Activated CD4-positive, alpha-beta T cell treated with anti-CD3 and anti-CD28 coated beads for 36 hours (primary cell): ENCODE measurements at regions of chr16 and their contacts with region 1.

Region 1: DNA sequence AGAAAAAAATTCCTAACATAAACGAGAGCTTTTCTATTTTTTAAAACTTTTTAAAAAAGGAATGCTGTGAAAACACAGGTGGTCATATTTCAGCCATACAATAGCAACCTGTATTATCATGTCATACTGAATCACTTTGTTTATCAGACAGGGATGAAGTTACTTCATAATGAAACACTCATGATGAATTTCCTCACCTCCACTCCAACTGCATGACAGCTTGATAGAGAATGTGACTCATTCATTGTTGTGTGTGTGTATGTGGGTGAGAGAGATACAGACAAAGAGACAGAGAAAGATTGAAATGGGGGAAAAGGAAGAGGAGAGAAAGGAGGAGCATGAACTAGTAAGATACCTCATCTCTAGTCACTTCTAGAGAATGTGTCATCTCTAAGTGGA is 109.0 kb downstream of the SYCE1L start:
- DNase-seq: no peak
- ATAC-seq: peak; percentile 95
- H3K4me3 Mint-ChIP-seq: no peak overlapping the region
- H3K27ac Mint-ChIP-seq: peak overlapping the region; percentile 73
- H3K4me1 Mint-ChIP-seq: peaks cover 28% of the 10 kb centered on the region
- H3K27me3 Mint-ChIP-seq: peaks cover 14% of the 10 kb centered on the region

Region 2: GRCh38 chr16:76932541-76933211 is 375.5 kb before region 1 on chr16:
- CTCF ChIA-PET with region 1: no interaction called
- POLR2A ChIA-PET with region 1: no interaction called
- intact Hi-C with region 1: loop called in 1 of 2 experiments (anchors 5 kb)
- DNase-seq: no peak
- ATAC-seq: peak; percentile 85
- H3K4me3 Mint-ChIP-seq: no peak overlapping the region
- H3K27ac Mint-ChIP-seq: no peak overlapping the region
- H3K4me1 Mint-ChIP-seq: peaks cover 4% of the 10 kb centered on the region
- H3K27me3 Mint-ChIP-seq: peaks cover 10% of the 10 kb centered on the region

Region 3: GRCh38 chr16:77090062-77090461 is 218.1 kb before region 1 on chr16:
- CTCF ChIA-PET with region 1: no interaction called
- POLR2A ChIA-PET with region 1: no interaction called
- intact Hi-C with region 1: no loop called
- DNase-seq: no peak
- ATAC-seq: no peak
- H3K4me3 Mint-ChIP-seq: no peak overlapping the region
- H3K27ac Mint-ChIP-seq: no peak overlapping the region
- H3K4me1 Mint-ChIP-seq: no peaks in the 10 kb centered on the region
- H3K27me3 Mint-ChIP-seq: peaks cover 6% of the 10 kb centered on the region

Region 4: DNA sequence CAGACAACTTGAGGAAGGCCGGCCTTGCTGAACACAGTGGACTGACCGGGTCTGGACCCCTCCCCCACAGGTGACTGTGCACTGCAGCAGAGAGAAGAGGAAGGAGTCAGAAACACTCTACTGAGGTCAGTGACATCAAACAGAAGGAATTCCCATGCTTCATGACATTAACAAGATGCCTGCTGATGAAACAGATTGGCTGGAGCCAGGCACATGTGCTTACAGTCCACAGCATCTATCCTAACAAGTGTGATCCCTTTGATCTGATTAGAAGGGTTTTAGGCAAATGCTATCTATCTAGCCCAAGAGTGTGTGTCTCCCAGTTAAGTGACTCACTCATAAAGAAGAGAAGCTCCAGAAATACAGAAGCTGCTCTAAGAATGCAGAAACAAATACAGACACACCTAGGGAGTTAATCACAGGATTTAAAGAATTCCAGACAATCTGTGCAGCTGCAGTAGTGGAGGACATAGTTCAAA is 18.8 kb before region 1 on chr16:
- CTCF ChIA-PET with region 1: no interaction called
- POLR2A ChIA-PET with region 1: no interaction called
- intact Hi-C with region 1: loop called in 1 of 2 experiments (anchors 2 kb)
- DNase-seq: no peak
- ATAC-seq: no peak
- H3K4me3 Mint-ChIP-seq: no peak overlapping the region
- H3K27ac Mint-ChIP-seq: no peak overlapping the region
- H3K4me1 Mint-ChIP-seq: peaks cover 10% of the 10 kb centered on the region
- H3K27me3 Mint-ChIP-seq: peaks cover 1% of the 10 kb centered on the region

Region 5: DNA sequence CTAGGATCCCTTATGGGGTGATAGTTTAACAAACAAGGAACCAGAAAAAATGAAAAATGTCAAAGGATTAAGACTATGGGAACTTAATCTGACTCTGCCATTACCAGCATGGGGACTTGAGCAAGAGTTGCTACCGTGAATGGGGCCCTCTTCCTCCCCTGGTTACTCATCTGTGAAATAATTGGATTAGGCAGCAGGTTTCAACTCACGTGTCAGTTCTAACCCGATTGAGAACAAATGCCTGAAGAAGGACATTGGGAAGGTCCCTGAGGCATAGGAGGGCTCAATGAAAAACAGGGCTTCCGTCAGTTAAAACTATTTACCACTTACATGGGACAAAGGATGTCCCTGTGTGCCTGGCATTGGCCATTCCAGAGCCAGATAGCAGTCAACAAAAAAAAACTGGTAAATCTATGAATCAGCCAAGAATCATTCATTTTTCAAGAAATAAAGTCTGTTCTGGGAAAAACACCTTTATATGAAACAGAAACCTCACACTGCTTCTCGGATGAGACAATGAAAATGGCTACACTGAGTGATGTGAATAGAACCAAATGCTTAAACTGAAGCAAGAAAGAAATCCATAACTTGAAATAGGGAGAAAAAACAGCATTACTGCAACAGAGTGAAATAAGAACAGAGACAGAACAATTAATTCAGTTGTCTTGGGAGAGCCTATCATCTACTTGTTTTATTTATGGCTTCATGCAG is 22.3 kb after region 1 on chr16:
- CTCF ChIA-PET with region 1: interaction called, 4 read pairs
- POLR2A ChIA-PET with region 1: no interaction called
- intact Hi-C with region 1: loop called (anchors 1 kb)
- DNase-seq: peak; percentile 51
- ATAC-seq: peak; percentile 83
- H3K4me3 Mint-ChIP-seq: no peak overlapping the region
- H3K27ac Mint-ChIP-seq: peak overlapping the region; percentile 59
- H3K4me1 Mint-ChIP-seq: peaks cover 30% of the 10 kb centered on the region
- H3K27me3 Mint-ChIP-seq: peaks cover 14% of the 10 kb centered on the region

Region 6: DNA sequence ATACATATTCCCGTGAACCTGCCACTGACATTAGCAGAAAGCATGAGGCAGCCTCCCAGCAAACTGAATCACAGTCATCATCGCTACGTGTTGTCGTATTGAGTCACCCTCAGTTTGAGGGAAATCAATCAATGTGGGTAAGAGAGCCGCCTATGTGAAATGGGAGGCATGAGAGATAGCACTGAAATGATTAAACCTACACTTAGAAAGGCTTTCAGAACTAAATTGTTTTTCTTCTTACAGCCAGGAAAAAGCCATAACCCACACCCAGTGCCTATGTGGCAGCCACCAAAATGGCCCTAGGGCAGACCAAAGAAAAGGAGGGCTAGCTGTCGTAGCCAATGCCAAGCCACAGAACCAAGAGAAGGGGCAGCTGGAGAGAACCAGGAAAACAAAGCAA is 36.2 kb after region 1 on chr16:
- CTCF ChIA-PET with region 1: no interaction called
- POLR2A ChIA-PET with region 1: no interaction called
- intact Hi-C with region 1: loop called (anchors 1 to 5 kb)
- DNase-seq: peak; percentile 14
- ATAC-seq: peak; percentile 53
- H3K4me3 Mint-ChIP-seq: no peak overlapping the region
- H3K27ac Mint-ChIP-seq: no peak overlapping the region
- H3K4me1 Mint-ChIP-seq: no peaks in the 10 kb centered on the region
- H3K27me3 Mint-ChIP-seq: peaks cover 14% of the 10 kb centered on the region